HCT116 (cell line): ENCODE measurements at regions of chr3 and their contacts with region 1.

Region 1: GRCh38 chr3:146589899-146590508 is 15.1 kb downstream of the PLSCR5 start:
- DNase-seq: peak; percentile 27
- ATAC-seq: no peak; the same call in 1 of the 2 replicates
- H3K4me3 ChIP-seq: no peak overlapping the region
- H3K27ac ChIP-seq: no peak overlapping the region
- H3K4me1 ChIP-seq: no peaks in the 10 kb centered on the region
- H3K27me3 ChIP-seq: no peaks in the 10 kb centered on the region
- CTCF ChIP-seq: peak; percentile 47 to 68 (median 63); a peak in 5 of 6 replicates
- POLR2A ChIP-seq: no peak
- RAD21 ChIP-seq: peak; percentile 71

Region 2: DNA sequence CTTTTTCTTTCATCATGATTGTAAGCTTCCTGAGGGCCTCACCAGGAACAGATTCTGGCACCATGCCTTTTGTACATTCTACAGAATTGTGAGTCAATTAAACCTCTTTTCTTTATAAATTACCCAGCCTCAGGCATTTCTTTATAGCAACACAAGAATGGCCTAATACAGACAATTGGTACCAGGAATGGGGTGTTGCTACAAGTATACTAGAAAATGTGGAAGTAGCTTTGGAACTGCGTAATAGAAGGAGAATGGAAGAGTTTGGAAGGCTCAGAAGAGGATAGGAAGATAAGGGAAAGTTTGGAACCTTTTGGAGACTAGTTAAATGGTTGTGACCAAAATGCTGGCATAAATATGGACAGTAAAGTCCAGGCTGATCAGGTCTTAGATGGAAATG is 230.2 kb before region 1 on chr3:
- CTCF ChIA-PET with region 1: no interaction called
- POLR2A ChIA-PET with region 1: no interaction called
- RAD21 ChIA-PET with region 1: no interaction called
- intact Hi-C with region 1: no loop called
- DNase-seq: no peak
- ATAC-seq: no peak
- H3K4me3 ChIP-seq: no peak overlapping the region
- H3K27ac ChIP-seq: no peak overlapping the region
- H3K4me1 ChIP-seq: no peaks in the 10 kb centered on the region
- H3K27me3 ChIP-seq: no peaks in the 10 kb centered on the region
- CTCF ChIP-seq: no peak
- POLR2A ChIP-seq: no peak
- RAD21 ChIP-seq: no peak

Region 3: GRCh38 chr3:147191795-147192385 is 601.9 kb after region 1 on chr3:
- CTCF ChIA-PET with region 1: no interaction called
- POLR2A ChIA-PET with region 1: no interaction called
- RAD21 ChIA-PET with region 1: no interaction called
- intact Hi-C with region 1: loop called (anchors 5 kb)
- DNase-seq: peak; percentile 68
- ATAC-seq: peak; percentile 60; the same call in 1 of the 2 replicates
- H3K4me3 ChIP-seq: no peak overlapping the region
- H3K27ac ChIP-seq: no peak overlapping the region
- H3K4me1 ChIP-seq: no peaks in the 10 kb centered on the region
- H3K27me3 ChIP-seq: no peaks in the 10 kb centered on the region
- CTCF ChIP-seq: peak; percentile 42 to 86 (median 82); a peak in 5 of 6 replicates
- POLR2A ChIP-seq: no peak
- RAD21 ChIP-seq: peak; percentile 67

Region 4: DNA sequence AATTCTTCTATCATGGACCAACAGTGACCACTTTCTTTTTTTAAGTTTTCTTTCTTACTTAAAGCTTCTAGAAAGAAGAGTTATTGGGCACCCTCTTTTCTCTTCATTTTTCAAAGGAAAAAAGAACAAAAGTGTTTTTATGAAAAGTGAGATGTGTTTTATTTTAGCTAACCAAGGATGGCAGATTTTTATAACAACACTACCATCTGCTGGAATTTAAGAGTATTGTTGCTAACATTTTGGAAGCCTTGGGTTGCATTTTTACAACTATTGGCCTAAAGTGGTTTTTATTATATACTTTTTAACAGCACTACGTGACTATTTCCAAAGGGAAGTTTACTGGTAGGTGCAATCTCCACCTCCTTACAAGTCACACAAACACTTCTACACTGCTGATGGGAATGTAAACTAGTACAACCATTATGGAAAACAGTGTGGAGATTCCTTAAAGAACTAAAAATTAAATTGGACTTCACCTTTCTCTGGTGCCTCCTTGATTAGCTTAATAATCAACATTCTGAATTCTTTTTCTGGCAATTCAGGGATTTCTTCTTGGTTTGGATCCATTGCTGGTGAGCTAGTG is 1870.0 kb after region 1 on chr3:
- CTCF ChIA-PET with region 1: no interaction called
- POLR2A ChIA-PET with region 1: no interaction called
- RAD21 ChIA-PET with region 1: no interaction called
- intact Hi-C with region 1: loop called (anchors 10 kb)
- DNase-seq: peak; percentile 6
- ATAC-seq: no peak
- H3K4me3 ChIP-seq: no peak overlapping the region
- H3K27ac ChIP-seq: no peak overlapping the region
- H3K4me1 ChIP-seq: no peaks in the 10 kb centered on the region
- H3K27me3 ChIP-seq: no peaks in the 10 kb centered on the region
- CTCF ChIP-seq: peak; percentile 31 to 67 (median 31); a peak in 4 of 6 replicates
- POLR2A ChIP-seq: no peak
- RAD21 ChIP-seq: peak; percentile 73